Naive thymus-derived CD4-positive, alpha-beta T cell (primary cell): ENCODE measurements at regions of chr2 and their contacts with region 1.

Region 1: GRCh38 chr2:60881047-60881932 is at the start of gene REL:
- DNase-seq: peak; percentile 77 to 95 (median 88)
- ATAC-seq: peak; percentile 92
- H3K4me3 ChIP-seq: peak within 1 kb of the TSS; percentile 83
- H3K4me3 Mint-ChIP-seq: peak within 1 kb of the TSS; percentile 91 to 98 (median 96)
- H3K27ac ChIP-seq: peak within 1 kb of the TSS; percentile 100
- H3K27ac Mint-ChIP-seq: peak within 1 kb of the TSS; percentile 93 to 100 (median 98)
- H3K4me1 ChIP-seq: peaks cover 11 to 24% of the 10 kb centered on the region in 2 donors
- H3K4me1 Mint-ChIP-seq: peaks cover 22 to 39% (median 33%) of the 10 kb centered on the region in 7 donors
- H3K27me3 ChIP-seq: no peaks in the 10 kb centered on the region
- H3K27me3 Mint-ChIP-seq: no peaks in the 10 kb centered on the region
- total RNA-seq, gene REL: 18.9 to 78.8 (median 26.4) TPM

Region 2: DNA sequence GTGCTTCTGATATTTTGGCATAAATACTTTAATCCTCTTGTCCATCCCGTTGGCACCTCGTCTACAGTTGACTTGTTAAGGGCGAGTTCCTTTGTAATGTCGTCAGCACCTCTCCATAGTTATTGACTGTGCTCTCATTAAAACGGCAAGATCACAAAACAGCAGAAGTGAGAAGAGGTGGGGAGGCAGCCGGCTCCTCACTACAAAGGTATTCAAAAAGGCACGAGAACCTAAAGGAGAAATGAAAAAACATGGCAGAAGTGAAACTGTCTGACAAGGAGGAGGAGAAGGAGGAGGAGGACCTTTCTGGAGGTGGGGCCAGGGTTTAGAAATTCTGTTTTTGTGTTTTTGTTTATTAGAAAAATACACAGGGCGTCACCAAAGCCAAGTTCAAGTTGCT is 563.4 kb before region 1 on chr2:
- CTCF ChIA-PET with region 1: no interaction called
- POLR2A ChIA-PET with region 1: no interaction called
- intact Hi-C with region 1: no loop called
- DNase-seq: no peak
- ATAC-seq: peak; percentile 49
- H3K4me3 ChIP-seq: no peak overlapping the region
- H3K4me3 Mint-ChIP-seq: no peak overlapping the region
- H3K27ac ChIP-seq: no peak overlapping the region
- H3K27ac Mint-ChIP-seq: no peak overlapping the region
- H3K4me1 ChIP-seq: no peaks in the 10 kb centered on the region
- H3K4me1 Mint-ChIP-seq: peaks cover 0 to 20% (median 0%) of the 10 kb centered on the region in 7 donors
- H3K27me3 ChIP-seq: no peaks in the 10 kb centered on the region
- H3K27me3 Mint-ChIP-seq: peaks cover 0 to 21% (median 10%) of the 10 kb centered on the region in 5 donors

Region 3: DNA sequence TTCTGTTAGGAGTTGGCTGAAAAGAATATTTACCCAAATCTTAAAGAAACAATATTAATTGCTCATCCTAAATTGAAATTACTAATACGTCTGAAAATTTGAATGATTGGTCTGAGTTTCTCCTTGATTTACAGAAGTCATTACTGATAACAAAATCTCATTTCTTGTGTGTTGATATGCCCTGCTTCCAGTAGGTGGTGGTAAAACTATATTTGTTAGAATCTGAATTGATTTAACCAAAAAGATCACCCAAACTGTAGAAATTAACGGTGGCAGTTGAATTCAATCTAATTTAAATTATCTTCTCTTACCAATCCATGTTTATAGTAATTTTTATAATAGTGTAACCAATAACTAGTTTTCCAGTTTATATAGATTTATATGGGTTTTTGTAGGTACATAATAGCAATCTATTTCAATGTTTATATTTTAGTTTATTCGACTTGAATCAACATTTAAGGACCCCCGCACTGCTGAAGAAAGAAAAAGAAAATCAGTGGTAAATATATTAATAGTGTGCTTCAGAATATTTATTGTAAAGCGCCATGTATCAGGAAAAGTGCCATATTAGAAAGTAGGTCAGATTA is 86.9 kb before region 1 on chr2:
- CTCF ChIA-PET with region 1: no interaction called
- POLR2A ChIA-PET with region 1: interaction called, 3 read pairs
- intact Hi-C with region 1: loop called in 1 of 2 experiments (anchors 1 kb)
- DNase-seq: peak in 4 of 9 donors; percentile 20 to 44 (median 27)
- ATAC-seq: peak; percentile 64
- H3K4me3 ChIP-seq: no peak overlapping the region
- H3K4me3 Mint-ChIP-seq: no peak overlapping the region
- H3K27ac ChIP-seq: no peak overlapping the region
- H3K27ac Mint-ChIP-seq: peak overlapping the region in 2 of 9 donors; percentile 2 to 42
- H3K4me1 ChIP-seq: peaks cover 0 to 7% of the 10 kb centered on the region in 2 donors
- H3K4me1 Mint-ChIP-seq: peaks cover 0 to 16% (median 2%) of the 10 kb centered on the region in 7 donors
- H3K27me3 ChIP-seq: no peaks in the 10 kb centered on the region
- H3K27me3 Mint-ChIP-seq: no peaks in the 10 kb centered on the region

Region 4: GRCh38 chr2:60867848-60868247 is 13.4 kb before region 1 on chr2:
- CTCF ChIA-PET with region 1: no interaction called
- POLR2A ChIA-PET with region 1: interaction called, 38 read pairs
- intact Hi-C with region 1: loop called in 1 of 2 experiments (anchors 1 kb)
- DNase-seq: peak in 7 of 9 donors; percentile 22 to 68 (median 51)
- ATAC-seq: peak; percentile 92
- H3K4me3 ChIP-seq: no peak overlapping the region
- H3K4me3 Mint-ChIP-seq: peak overlapping the region; percentile 36 to 81 (median 65)
- H3K27ac ChIP-seq: no peak overlapping the region
- H3K27ac Mint-ChIP-seq: peak overlapping the region; percentile 51 to 94 (median 85)
- H3K4me1 ChIP-seq: peaks cover 12 to 13% of the 10 kb centered on the region in 2 donors
- H3K4me1 Mint-ChIP-seq: peaks cover 17 to 25% (median 22%) of the 10 kb centered on the region in 7 donors
- H3K27me3 ChIP-seq: no peaks in the 10 kb centered on the region
- H3K27me3 Mint-ChIP-seq: no peaks in the 10 kb centered on the region

Region 5: GRCh38 chr2:60934165-60934722 is 53.0 kb after region 1 on chr2:
- CTCF ChIA-PET with region 1: no interaction called
- POLR2A ChIA-PET with region 1: no interaction called
- intact Hi-C with region 1: no loop called
- DNase-seq: no peak
- ATAC-seq: no peak
- H3K4me3 ChIP-seq: no peak overlapping the region
- H3K4me3 Mint-ChIP-seq: no peak overlapping the region
- H3K27ac ChIP-seq: no peak overlapping the region
- H3K27ac Mint-ChIP-seq: peak overlapping the region in 1 of 9 donors; percentile 60
- H3K4me1 ChIP-seq: no peaks in the 10 kb centered on the region
- H3K4me1 Mint-ChIP-seq: peaks cover under 1 to 21% (median 5%) of the 10 kb centered on the region in 7 donors
- H3K27me3 ChIP-seq: no peaks in the 10 kb centered on the region
- H3K27me3 Mint-ChIP-seq: no peaks in the 10 kb centered on the region

Region 6: DNA sequence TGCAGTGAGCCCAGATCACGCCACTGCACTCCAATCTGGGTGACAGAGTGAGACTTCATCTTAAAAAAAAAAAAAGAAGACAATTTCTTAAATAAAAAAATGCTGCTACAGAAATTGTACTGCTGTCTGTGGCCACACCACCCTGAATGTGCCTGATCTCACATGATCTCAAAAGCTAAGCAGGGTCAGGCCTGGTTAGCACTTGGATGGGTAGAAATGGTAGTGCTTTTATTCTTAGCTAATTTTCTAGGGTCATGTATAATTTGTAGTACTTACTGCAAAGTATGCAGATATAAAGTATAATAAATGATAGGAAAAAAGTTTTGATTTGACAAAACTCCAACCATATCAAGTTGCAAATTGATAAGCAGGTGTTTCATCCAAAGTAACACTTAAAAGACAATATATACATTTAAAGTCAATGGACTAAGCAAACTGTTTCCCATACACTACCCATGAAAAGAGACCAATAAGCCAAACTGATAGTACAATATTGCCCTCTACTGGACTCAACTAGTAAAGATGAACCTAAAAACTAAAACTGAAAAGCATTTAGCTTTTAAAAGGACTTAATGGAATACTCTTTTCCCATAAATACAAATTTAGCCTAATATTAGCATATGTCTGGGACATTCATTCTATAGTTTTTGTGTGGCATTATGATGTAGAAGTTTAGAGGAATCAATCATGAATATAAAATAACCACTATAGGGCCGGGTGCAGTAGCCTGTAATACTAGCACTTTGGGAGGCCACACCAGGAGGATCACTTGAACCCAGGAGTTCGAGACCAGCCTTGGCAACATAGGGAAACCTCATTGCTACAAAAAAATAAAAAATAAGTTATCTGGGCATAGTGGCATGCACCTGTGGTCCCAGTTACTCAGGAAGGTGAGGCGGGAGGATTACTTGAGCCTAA is 117.6 kb after region 1 on chr2:
- CTCF ChIA-PET with region 1: no interaction called
- POLR2A ChIA-PET with region 1: no interaction called
- intact Hi-C with region 1: loop called (anchors 1 to 5 kb)
- DNase-seq: peak in 7 of 9 donors; percentile 13 to 63 (median 52)
- ATAC-seq: peak; percentile 91
- H3K4me3 ChIP-seq: no peak overlapping the region
- H3K4me3 Mint-ChIP-seq: no peak overlapping the region
- H3K27ac ChIP-seq: no peak overlapping the region
- H3K27ac Mint-ChIP-seq: no peak overlapping the region
- H3K4me1 ChIP-seq: no peaks in the 10 kb centered on the region
- H3K4me1 Mint-ChIP-seq: no peaks in the 10 kb centered on the region
- H3K27me3 ChIP-seq: no peaks in the 10 kb centered on the region
- H3K27me3 Mint-ChIP-seq: no peaks in the 10 kb centered on the region

Region 7: GRCh38 chr2:61144697-61145268 is 263.5 kb after region 1 on chr2:
- CTCF ChIA-PET with region 1: no interaction called
- POLR2A ChIA-PET with region 1: no interaction called
- intact Hi-C with region 1: loop called in 1 of 2 experiments (anchors 2 kb)
- DNase-seq: peak; percentile 74 to 90 (median 86)
- ATAC-seq: peak; percentile 92
- H3K4me3 ChIP-seq: peak overlapping the region; percentile 82
- H3K4me3 Mint-ChIP-seq: peak overlapping the region; percentile 88 to 98 (median 94)
- H3K27ac ChIP-seq: peak overlapping the region; percentile 73
- H3K27ac Mint-ChIP-seq: peak overlapping the region; percentile 90 to 98 (median 95)
- H3K4me1 ChIP-seq: peaks cover 4 to 5% of the 10 kb centered on the region in 2 donors
- H3K4me1 Mint-ChIP-seq: peaks cover 0 to 18% (median 7%) of the 10 kb centered on the region in 7 donors
- H3K27me3 ChIP-seq: no peaks in the 10 kb centered on the region
- H3K27me3 Mint-ChIP-seq: peaks cover 0 to 2% (median 0%) of the 10 kb centered on the region in 5 donors

Region 8: DNA sequence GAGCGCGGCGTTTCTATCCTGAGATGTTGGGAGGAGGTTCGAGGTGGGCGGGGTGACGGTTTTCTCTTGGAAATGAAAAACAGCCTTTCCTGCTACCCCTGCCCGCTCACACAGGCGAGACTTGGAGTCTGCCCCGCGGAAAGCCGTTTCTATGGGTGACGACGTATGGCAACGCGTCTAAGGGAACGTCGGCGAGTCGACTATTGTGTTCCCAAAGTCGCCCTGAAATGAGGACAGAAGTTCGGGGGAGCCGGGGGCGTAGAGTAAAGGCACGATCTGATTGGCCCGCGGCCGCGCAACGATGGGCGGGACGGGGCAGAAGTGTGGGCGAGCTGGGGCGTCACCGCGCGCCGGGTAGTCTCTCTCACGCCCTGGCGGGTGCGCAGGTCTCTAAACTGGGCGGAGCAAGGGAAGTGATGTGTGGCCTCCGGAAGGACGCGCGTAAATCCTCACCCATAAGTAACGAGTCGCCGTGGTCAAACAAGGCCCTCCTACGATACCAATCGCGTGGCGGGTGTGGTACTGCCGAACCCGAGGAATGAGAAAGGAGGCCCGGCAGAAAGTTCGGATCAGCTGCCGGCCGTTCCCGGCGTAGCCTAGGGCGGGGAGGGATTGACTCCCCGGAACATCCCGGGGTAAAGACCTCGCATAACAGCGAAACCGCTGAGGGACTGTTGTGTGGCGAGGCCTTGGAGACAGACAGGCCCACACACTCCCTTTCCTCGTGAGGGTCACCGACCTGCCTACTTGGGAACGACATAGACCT is 882.9 kb after region 1 on chr2:
- CTCF ChIA-PET with region 1: no interaction called
- POLR2A ChIA-PET with region 1: no interaction called
- intact Hi-C with region 1: loop called (anchors 1 to 2 kb)
- DNase-seq: peak; percentile 89 to 98 (median 97)
- ATAC-seq: peak; percentile 99
- H3K4me3 ChIP-seq: peak overlapping the region; percentile 71
- H3K4me3 Mint-ChIP-seq: peak overlapping the region; percentile 80 to 98 (median 95)
- H3K27ac ChIP-seq: peak overlapping the region; percentile 93
- H3K27ac Mint-ChIP-seq: peak overlapping the region; percentile 94 to 99 (median 98)
- H3K4me1 ChIP-seq: peaks cover 6 to 9% of the 10 kb centered on the region in 2 donors
- H3K4me1 Mint-ChIP-seq: peaks cover 0 to 16% (median 10%) of the 10 kb centered on the region in 7 donors
- H3K27me3 ChIP-seq: no peaks in the 10 kb centered on the region
- H3K27me3 Mint-ChIP-seq: peaks cover 0 to under 1% (median 0%) of the 10 kb centered on the region in 5 donors